Naive thymus-derived CD4-positive, alpha-beta T cell (primary cell): ENCODE measurements at regions of chr9 and their contacts with region 1.

Region 1: DNA sequence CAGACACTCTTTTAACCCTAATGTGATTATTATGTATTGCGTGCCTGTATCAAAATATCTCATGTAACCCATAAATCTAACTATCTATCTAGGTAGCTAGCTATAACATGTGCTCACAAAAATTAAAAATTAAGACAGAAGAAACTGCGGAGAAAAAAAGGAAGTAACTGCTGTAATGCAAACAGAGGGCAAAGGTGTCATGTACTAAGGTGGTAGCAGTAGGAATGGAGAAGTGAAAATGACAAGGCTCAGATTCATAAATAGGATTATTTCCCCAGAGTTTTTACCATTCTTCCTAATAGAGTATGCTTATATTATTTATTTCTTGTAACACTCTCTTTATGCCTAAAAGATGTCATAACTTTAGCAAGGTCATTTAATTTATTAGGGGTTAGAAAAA is 1527.5 kb upstream of the C9orf72 start:
- DNase-seq: no peak
- ATAC-seq: no peak
- H3K4me3 ChIP-seq: no peak overlapping the region
- H3K4me3 Mint-ChIP-seq: no peak overlapping the region
- H3K27ac ChIP-seq: no peak overlapping the region
- H3K27ac Mint-ChIP-seq: no peak overlapping the region
- H3K4me1 ChIP-seq: no peaks in the 10 kb centered on the region
- H3K4me1 Mint-ChIP-seq: no peaks in the 10 kb centered on the region
- H3K27me3 ChIP-seq: no peaks in the 10 kb centered on the region
- H3K27me3 Mint-ChIP-seq: no peaks in the 10 kb centered on the region

Region 2: GRCh38 chr9:28961623-28962022 is 139.1 kb before region 1 on chr9:
- CTCF ChIA-PET with region 1: no interaction called
- POLR2A ChIA-PET with region 1: no interaction called
- intact Hi-C with region 1: loop called in 1 of 2 experiments (anchors 5 kb)
- DNase-seq: no peak
- ATAC-seq: no peak
- H3K4me3 ChIP-seq: no peak overlapping the region
- H3K4me3 Mint-ChIP-seq: no peak overlapping the region
- H3K27ac ChIP-seq: no peak overlapping the region
- H3K27ac Mint-ChIP-seq: no peak overlapping the region
- H3K4me1 ChIP-seq: no peaks in the 10 kb centered on the region
- H3K4me1 Mint-ChIP-seq: no peaks in the 10 kb centered on the region
- H3K27me3 ChIP-seq: no peaks in the 10 kb centered on the region
- H3K27me3 Mint-ChIP-seq: no peaks in the 10 kb centered on the region

Region 3: DNA sequence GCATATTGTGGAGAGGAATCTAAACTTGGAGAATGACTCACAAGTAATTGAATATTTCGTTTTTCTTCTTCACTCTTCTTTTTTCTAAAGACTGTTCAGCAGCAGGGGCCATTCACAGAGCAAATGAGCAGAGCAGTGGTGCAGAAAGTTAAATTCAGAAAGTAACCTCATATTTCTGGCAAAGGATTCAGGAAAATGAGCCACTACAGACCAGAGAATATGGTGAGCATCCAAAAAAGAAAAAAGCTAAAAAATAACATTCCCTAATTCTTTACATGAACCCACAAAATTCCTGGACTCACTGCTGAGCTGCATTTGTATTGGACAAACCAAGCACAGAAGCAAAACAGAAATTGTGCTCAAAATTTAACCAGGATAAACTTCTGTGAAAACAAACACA is 40.7 kb before region 1 on chr9:
- CTCF ChIA-PET with region 1: no interaction called
- POLR2A ChIA-PET with region 1: no interaction called
- intact Hi-C with region 1: loop called in 1 of 2 experiments (anchors 5 kb)
- DNase-seq: no peak
- ATAC-seq: no peak
- H3K4me3 ChIP-seq: no peak overlapping the region
- H3K4me3 Mint-ChIP-seq: no peak overlapping the region
- H3K27ac ChIP-seq: no peak overlapping the region
- H3K27ac Mint-ChIP-seq: no peak overlapping the region
- H3K4me1 ChIP-seq: no peaks in the 10 kb centered on the region
- H3K4me1 Mint-ChIP-seq: no peaks in the 10 kb centered on the region
- H3K27me3 ChIP-seq: no peaks in the 10 kb centered on the region
- H3K27me3 Mint-ChIP-seq: no peaks in the 10 kb centered on the region

Region 4: GRCh38 chr9:29118555-29118954 is 17.8 kb after region 1 on chr9:
- CTCF ChIA-PET with region 1: no interaction called
- POLR2A ChIA-PET with region 1: no interaction called
- intact Hi-C with region 1: no loop called
- DNase-seq: no peak
- ATAC-seq: no peak
- H3K4me3 ChIP-seq: no peak overlapping the region
- H3K4me3 Mint-ChIP-seq: no peak overlapping the region
- H3K27ac ChIP-seq: no peak overlapping the region
- H3K27ac Mint-ChIP-seq: no peak overlapping the region
- H3K4me1 ChIP-seq: no peaks in the 10 kb centered on the region
- H3K4me1 Mint-ChIP-seq: no peaks in the 10 kb centered on the region
- H3K27me3 ChIP-seq: no peaks in the 10 kb centered on the region
- H3K27me3 Mint-ChIP-seq: no peaks in the 10 kb centered on the region

Region 5: DNA sequence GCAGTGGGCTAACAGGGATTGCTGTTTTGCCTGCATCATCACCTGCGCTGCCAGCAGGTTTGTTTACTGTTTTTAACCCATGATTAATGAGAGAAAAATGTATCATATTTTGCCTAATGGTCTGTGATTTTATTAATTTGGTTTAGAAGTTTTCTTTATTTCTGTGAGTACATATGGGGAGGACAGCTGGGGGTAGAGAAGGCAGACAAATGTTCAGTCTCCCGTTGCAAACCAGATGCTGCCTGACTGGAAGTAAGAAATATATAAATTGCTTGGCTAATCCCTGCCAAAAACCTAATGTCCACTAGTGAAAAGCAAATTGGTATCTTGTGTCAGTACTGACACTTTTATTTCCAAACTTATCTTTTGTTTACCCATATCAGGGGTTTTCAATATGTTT is 238.6 kb after region 1 on chr9:
- CTCF ChIA-PET with region 1: no interaction called
- POLR2A ChIA-PET with region 1: no interaction called
- intact Hi-C with region 1: no loop called
- DNase-seq: no peak
- ATAC-seq: no peak
- H3K4me3 ChIP-seq: no peak overlapping the region
- H3K4me3 Mint-ChIP-seq: no peak overlapping the region
- H3K27ac ChIP-seq: no peak overlapping the region
- H3K27ac Mint-ChIP-seq: no peak overlapping the region
- H3K4me1 ChIP-seq: no peaks in the 10 kb centered on the region
- H3K4me1 Mint-ChIP-seq: no peaks in the 10 kb centered on the region
- H3K27me3 ChIP-seq: no peaks in the 10 kb centered on the region
- H3K27me3 Mint-ChIP-seq: no peaks in the 10 kb centered on the region